ENCODE measurements at regions of chr12 and their contacts with region 1.

Region 1: GRCh38 chr12:40946612-40947194 is 241.4 kb upstream of the PDZRN4 start:
- DNase-seq: peak in 5 of 9 donors; percentile 3 to 18 (median 14)
- ATAC-seq: no peak
- H3K4me3 ChIP-seq: no peak overlapping the region
- H3K4me3 Mint-ChIP-seq: no peak overlapping the region
- H3K27ac ChIP-seq: no peak overlapping the region
- H3K27ac Mint-ChIP-seq: no peak overlapping the region
- H3K4me1 ChIP-seq: no peaks in the 10 kb centered on the region
- H3K4me1 Mint-ChIP-seq: no peaks in the 10 kb centered on the region
- H3K27me3 ChIP-seq: no peaks in the 10 kb centered on the region
- H3K27me3 Mint-ChIP-seq: peaks cover 0 to 9% (median 5%) of the 10 kb centered on the region in 5 donors

Region 2: GRCh38 chr12:42104087-42104486 is 1157.4 kb after region 1 on chr12:
- CTCF ChIA-PET with region 1: no interaction called
- POLR2A ChIA-PET with region 1: no interaction called
- intact Hi-C with region 1: loop called (anchors 5 to 10 kb)
- DNase-seq: no peak
- ATAC-seq: peak; percentile 44
- H3K4me3 ChIP-seq: no peak overlapping the region
- H3K4me3 Mint-ChIP-seq: no peak overlapping the region
- H3K27ac ChIP-seq: no peak overlapping the region
- H3K27ac Mint-ChIP-seq: peak overlapping the region in 5 of 9 donors; percentile 20 to 87 (median 64)
- H3K4me1 ChIP-seq: no peaks in the 10 kb centered on the region
- H3K4me1 Mint-ChIP-seq: peaks cover 0 to 11% (median 5%) of the 10 kb centered on the region in 7 donors
- H3K27me3 ChIP-seq: no peaks in the 10 kb centered on the region
- H3K27me3 Mint-ChIP-seq: no peaks in the 10 kb centered on the region

Measured in naive thymus-derived CD4-positive, alpha-beta T cell (primary cell).